ENCODE measurements at regions of chr3 and their contacts with region 1.

Region 1: GRCh38 chr3:49093853-49094767 is at the start of gene QRICH1:
- DNase-seq: peak; percentile 96 to 98
- ATAC-seq: peak; percentile 90 to 96 (median 94)
- H3K4me3 ChIP-seq: peak within 1 kb of the TSS; percentile 71 to 99 (median 90)
- H3K27ac ChIP-seq: peak within 1 kb of the TSS; percentile 84 to 98 (median 94)
- H3K4me1 ChIP-seq: peaks cover 17 to 64% (median 48%) of the 10 kb centered on the region in 9 donors
- H3K27me3 ChIP-seq: no peaks in the 10 kb centered on the region
- CTCF ChIP-seq: peak; percentile 28 to 72 (median 54)
- total RNA-seq, gene QRICH1: 54.5 to 72.5 (median 58.7) TPM

Region 2: GRCh38 chr3:49104483-49105291 is 10.6 kb after region 1 on chr3 and contains the start of gene QARS1:
- intact Hi-C with region 1: loop called in 1 of 10 experiments (anchors 1 kb)
- DNase-seq: peak; percentile 94 to 97
- ATAC-seq: peak; percentile 95 to 99 (median 98)
- H3K4me3 ChIP-seq: peak within 1 kb of the TSS; percentile 63 to 100 (median 86)
- H3K27ac ChIP-seq: peak within 1 kb of the TSS; percentile 84 to 94 (median 91)
- H3K4me1 ChIP-seq: peaks cover 12 to 27% (median 23%) of the 10 kb centered on the region in 9 donors
- H3K27me3 ChIP-seq: no peaks in the 10 kb centered on the region
- CTCF ChIP-seq: no peak
- total RNA-seq, gene QARS1: 173 to 265 (median 206) TPM

Region 3: DNA sequence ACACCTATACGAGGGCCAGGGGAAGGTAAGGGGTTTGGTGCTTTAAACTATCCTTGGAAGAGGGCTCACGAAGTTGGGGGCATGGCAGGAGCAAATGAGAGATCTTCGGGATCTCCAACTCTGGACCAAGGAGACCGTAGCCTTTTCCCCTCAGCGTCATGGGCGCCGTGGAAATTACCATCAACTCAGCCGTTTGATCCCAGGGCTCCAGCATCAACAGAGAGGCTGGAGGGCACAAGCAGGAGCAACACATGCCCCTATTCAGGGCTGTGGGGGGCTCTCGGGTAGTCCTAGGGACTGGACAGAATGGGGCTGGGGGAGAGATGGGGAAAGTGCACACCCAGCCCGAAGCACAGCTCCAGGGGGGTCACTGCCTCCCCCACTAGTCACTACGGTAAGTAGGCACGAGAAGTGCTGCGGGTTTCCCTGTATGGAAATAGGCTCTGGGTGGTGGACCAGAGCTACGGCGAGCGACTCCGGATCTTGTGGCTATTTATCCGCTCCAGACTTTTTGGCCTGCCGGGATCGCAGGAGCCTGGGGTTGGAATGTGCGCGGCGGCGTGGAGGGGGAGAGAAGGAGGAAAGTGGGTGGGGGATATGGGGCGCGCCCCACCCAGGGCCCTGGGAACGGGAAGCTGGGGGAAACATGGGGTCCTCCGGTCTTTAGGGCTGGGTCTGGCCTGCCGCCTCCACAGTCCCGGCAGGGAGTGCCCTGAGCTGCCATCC is 39.3 kb after region 1 on chr3:
- intact Hi-C with region 1: loop called in 2 of 10 experiments (anchors 5 kb)
- DNase-seq: peak; percentile 88 to 93
- ATAC-seq: peak; percentile 79 to 93 (median 86)
- H3K4me3 ChIP-seq: peak overlapping the region; percentile 61 to 97 (median 78)
- H3K27ac ChIP-seq: peak overlapping the region; percentile 85 to 99 (median 94)
- H3K4me1 ChIP-seq: peaks cover 15 to 46% (median 35%) of the 10 kb centered on the region in 9 donors
- H3K27me3 ChIP-seq: no peaks in the 10 kb centered on the region
- CTCF ChIP-seq: peak in 1 of 9 donors; percentile 0

Region 4: GRCh38 chr3:49165771-49166751 is 72.0 kb after region 1 on chr3 and contains the start of gene CCDC71:
- intact Hi-C with region 1: loop called in 2 of 10 experiments (anchors 1 to 2 kb)
- DNase-seq: peak; percentile 83 to 84
- ATAC-seq: peak; percentile 59 to 83 (median 73)
- H3K4me3 ChIP-seq: peak within 1 kb of the TSS; percentile 43 to 94 (median 84)
- H3K27ac ChIP-seq: peak within 1 kb of the TSS; percentile 74 to 97 (median 94)
- H3K4me1 ChIP-seq: peaks cover 3 to 34% (median 27%) of the 10 kb centered on the region in 9 donors
- H3K27me3 ChIP-seq: no peaks in the 10 kb centered on the region
- CTCF ChIP-seq: no peak
- total RNA-seq, gene CCDC71: 10.4 to 16.9 (median 12.3) TPM

Region 5: GRCh38 chr3:49238274-49239127 is 144.4 kb after region 1 on chr3:
- intact Hi-C with region 1: no loop called
- DNase-seq: peak in 1 of 2 donors; percentile 31
- ATAC-seq: peak; percentile 83 to 91 (median 88)
- H3K4me3 ChIP-seq: no peak overlapping the region
- H3K27ac ChIP-seq: peak overlapping the region; percentile 37 to 87 (median 64)
- H3K4me1 ChIP-seq: peaks cover 0 to 24% (median 15%) of the 10 kb centered on the region in 9 donors
- H3K27me3 ChIP-seq: no peaks in the 10 kb centered on the region
- CTCF ChIP-seq: no peak